ENCODE measurements at regions of chr7 and their contacts with region 1.

Region 1: GRCh38 chr7:82729172-82730030 is 285.8 kb upstream of the CACNA2D1 start:
- DNase-seq: peak; percentile 27
- H3K4me3 ChIP-seq: no peak overlapping the region
- H3K27ac ChIP-seq: no peak overlapping the region
- H3K27me3 ChIP-seq: no peaks in the 10 kb centered on the region
- CTCF ChIP-seq: peak; percentile 84

Region 2: GRCh38 chr7:81482600-81483186 is 1246.7 kb before region 1 on chr7:
- CTCF ChIA-PET with region 1: interaction called, 24 read pairs
- POLR2A ChIA-PET with region 1: no interaction called
- DNase-seq: no peak
- H3K4me3 ChIP-seq: no peak overlapping the region
- H3K27ac ChIP-seq: no peak overlapping the region
- H3K27me3 ChIP-seq: no peaks in the 10 kb centered on the region
- CTCF ChIP-seq: peak; percentile 56

Region 3: DNA sequence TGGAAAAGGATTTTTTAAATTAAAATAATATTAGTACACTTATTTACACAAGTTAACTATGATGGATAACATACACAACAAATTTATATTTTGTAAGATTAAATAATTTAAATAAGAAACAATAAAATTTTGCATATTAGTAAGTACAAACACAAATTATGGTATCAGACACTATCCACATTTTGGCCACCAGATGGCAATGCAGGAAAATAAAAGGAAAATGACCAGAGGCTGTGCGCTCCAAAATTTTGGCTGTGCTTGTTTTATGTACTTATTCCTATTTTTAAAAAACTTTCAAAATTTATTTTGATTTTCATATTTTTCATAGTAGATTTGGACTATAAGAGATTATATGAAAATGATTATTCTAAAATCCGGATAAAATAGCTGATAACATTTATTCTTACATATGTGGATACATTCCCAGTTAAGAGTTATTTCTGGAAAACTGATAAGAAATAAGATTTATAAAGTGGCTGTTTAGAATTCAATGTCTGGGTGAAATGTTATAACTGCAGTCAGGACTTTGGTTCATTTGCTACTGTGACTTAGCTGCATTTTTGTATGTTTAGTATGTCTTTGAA is 684.8 kb before region 1 on chr7:
- CTCF ChIA-PET with region 1: interaction called, 30 read pairs
- POLR2A ChIA-PET with region 1: no interaction called
- DNase-seq: no peak
- H3K4me3 ChIP-seq: no peak overlapping the region
- H3K27ac ChIP-seq: no peak overlapping the region
- H3K27me3 ChIP-seq: no peaks in the 10 kb centered on the region
- CTCF ChIP-seq: peak; percentile 66

Region 4: DNA sequence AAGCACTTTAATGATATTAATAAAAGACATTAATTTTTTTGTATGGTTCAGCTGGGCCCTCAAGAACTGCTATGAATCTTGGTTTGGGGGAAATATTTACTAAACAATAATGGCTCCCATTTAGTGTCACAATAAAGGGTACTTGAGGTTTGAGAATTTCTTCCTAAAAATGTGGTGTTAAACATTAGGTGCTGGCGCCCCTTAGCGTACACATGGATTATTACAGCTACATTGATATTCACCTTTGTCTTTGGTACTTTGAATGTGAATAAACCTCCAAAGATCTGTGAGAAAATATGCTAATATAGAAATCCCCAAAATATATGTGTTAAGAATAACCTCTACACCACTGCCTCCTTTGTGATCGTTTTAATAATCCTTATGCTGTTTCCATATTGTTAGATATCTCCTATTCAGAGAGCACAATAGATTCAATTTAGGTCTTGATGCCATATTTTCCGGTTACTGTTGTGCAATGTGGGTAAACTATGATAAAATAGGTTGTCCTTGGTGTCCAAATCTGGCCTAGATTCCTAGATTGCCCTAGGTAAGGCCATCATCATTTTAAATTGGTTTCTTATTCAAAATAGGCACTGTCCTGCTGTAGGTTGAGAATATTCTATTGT is 124.0 kb before region 1 on chr7:
- CTCF ChIA-PET with region 1: interaction called, 13 read pairs
- POLR2A ChIA-PET with region 1: no interaction called
- DNase-seq: no peak
- H3K4me3 ChIP-seq: no peak overlapping the region
- H3K27ac ChIP-seq: no peak overlapping the region
- H3K27me3 ChIP-seq: no peaks in the 10 kb centered on the region
- CTCF ChIP-seq: peak; percentile 75

Region 5: DNA sequence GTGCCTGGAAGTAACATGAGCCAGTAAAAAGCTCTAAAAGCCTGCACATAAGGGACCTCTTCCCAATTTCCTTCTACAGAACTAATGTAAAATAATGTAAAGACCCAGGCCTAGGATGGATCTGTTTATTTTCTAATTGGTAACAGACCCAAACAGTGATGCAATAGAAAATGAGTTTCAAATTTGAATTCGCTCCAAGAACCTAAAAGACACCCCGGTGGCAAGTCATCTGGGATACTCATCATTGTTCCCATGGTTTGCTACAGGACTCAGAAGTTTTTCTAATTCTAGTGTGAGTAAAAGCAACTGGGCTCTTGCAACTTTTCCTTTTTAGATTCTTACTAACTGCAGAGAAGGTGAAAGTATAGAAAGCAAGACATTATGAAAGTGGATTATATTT is 14.5 kb before region 1 on chr7:
- CTCF ChIA-PET with region 1: interaction called, 14 read pairs
- POLR2A ChIA-PET with region 1: no interaction called
- DNase-seq: no peak
- H3K4me3 ChIP-seq: no peak overlapping the region
- H3K27ac ChIP-seq: no peak overlapping the region
- H3K27me3 ChIP-seq: no peaks in the 10 kb centered on the region
- CTCF ChIP-seq: no peak

Region 6: GRCh38 chr7:82740246-82740848 is 10.9 kb after region 1 on chr7:
- CTCF ChIA-PET with region 1: interaction called, 15 read pairs
- POLR2A ChIA-PET with region 1: no interaction called
- DNase-seq: no peak
- H3K4me3 ChIP-seq: no peak overlapping the region
- H3K27ac ChIP-seq: no peak overlapping the region
- H3K27me3 ChIP-seq: no peaks in the 10 kb centered on the region
- CTCF ChIP-seq: peak; percentile 87